ENCODE measurements at regions of chr2 and their contacts with region 1.

Region 1: DNA sequence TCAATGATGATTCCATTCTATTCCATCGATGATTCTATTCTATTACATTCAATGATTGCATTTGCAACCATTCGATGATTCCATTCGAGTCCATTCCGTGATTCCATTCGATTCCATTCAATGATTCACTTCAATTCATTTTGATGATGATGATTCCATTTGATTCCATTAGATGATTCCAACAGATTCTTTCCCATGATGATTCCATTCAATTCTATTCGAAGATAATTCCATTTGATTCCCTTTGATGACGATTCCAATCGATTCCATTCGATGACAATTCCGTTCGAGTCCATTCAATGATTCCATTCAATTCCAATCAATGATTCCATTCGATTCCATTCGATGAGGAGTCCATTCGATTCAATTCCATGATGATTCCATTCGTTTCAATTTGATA is 1088.8 kb downstream of the RPIA start:
- DNase-seq: no peak
- ATAC-seq: no peak
- H3K4me3 ChIP-seq: no peak overlapping the region
- H3K27ac ChIP-seq: no peak overlapping the region
- H3K4me1 ChIP-seq: no peaks in the 10 kb centered on the region
- H3K27me3 ChIP-seq: no peaks in the 10 kb centered on the region
- CTCF ChIP-seq: no peak
- EP300 ChIP-seq: no peak
- POLR2A ChIP-seq: no peak
- RAD21 ChIP-seq: no peak

Region 2: DNA sequence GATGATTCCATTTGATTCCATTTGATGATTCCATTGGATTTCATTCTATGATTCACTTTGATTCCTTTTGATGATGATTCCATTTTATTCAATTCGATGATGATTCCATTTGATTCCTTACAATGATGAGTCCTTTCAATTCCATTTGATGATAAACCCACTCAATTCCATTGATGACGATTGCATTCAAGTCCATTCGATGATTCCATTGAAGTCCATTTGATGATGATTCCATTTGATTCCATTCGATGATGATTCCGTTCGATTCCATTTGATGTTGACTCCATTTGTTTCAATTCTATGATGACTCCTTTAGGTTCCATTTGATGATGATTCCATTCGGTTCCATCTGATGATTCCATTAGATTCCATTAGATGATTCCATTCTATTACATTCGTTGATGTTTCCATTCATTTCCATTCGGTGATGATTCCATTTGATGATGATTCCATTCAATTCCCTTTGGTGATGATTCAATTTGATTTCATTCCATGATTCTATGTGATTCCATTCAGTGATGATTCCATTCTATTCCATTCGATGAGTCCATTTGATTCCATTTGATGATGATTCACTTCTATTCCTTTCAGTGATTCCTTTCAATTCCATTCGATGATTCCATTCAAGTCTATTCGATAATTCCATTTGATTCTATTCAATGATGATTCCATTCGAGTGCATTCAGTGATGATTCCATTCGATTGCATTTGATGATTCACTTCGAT is 17.2 kb after region 1 on chr2:
- CTCF ChIA-PET with region 1: no interaction called
- POLR2A ChIA-PET with region 1: no interaction called
- in situ Hi-C with region 1: no loop called
- intact Hi-C with region 1: no loop called
- DNase-seq: no peak
- ATAC-seq: no peak
- H3K4me3 ChIP-seq: no peak overlapping the region
- H3K27ac ChIP-seq: no peak overlapping the region
- H3K4me1 ChIP-seq: no peaks in the 10 kb centered on the region
- H3K27me3 ChIP-seq: no peaks in the 10 kb centered on the region
- CTCF ChIP-seq: no peak
- EP300 ChIP-seq: no peak
- POLR2A ChIP-seq: no peak
- RAD21 ChIP-seq: no peak

Region 3: DNA sequence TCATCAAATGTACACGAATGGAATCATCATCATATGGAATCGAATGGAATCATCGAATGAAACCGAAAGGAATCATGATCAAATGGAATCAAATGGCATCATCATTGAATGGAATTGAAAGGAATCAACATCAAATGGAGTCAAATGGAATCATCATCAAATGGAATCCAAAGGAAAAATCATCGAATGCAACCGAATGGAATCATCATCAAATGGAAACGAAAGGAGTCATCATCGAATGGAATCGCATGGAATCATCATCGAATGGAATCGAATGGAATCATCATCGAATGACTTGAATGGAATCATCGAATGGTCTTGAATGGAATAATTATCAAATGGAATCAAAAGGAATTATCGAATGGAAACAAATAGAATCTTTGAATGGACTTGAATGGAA is 27.4 kb after region 1 on chr2:
- CTCF ChIA-PET with region 1: no interaction called
- POLR2A ChIA-PET with region 1: no interaction called
- in situ Hi-C with region 1: no loop called
- intact Hi-C with region 1: no loop called
- DNase-seq: no peak
- ATAC-seq: no peak
- H3K4me3 ChIP-seq: no peak overlapping the region
- H3K27ac ChIP-seq: no peak overlapping the region
- H3K4me1 ChIP-seq: no peaks in the 10 kb centered on the region
- H3K27me3 ChIP-seq: no peaks in the 10 kb centered on the region
- CTCF ChIP-seq: no peak
- EP300 ChIP-seq: no peak
- POLR2A ChIP-seq: no peak
- RAD21 ChIP-seq: no peak

Region 4: GRCh38 chr2:91420761-91421340 is 1640.5 kb after region 1 on chr2:
- CTCF ChIA-PET with region 1: no interaction called
- POLR2A ChIA-PET with region 1: no interaction called
- in situ Hi-C with region 1: loop called (anchors 25 kb)
- intact Hi-C with region 1: no loop called
- DNase-seq: no peak
- ATAC-seq: no peak
- H3K4me3 ChIP-seq: no peak overlapping the region
- H3K27ac ChIP-seq: no peak overlapping the region
- H3K4me1 ChIP-seq: no peaks in the 10 kb centered on the region
- H3K27me3 ChIP-seq: no peaks in the 10 kb centered on the region
- CTCF ChIP-seq: no peak
- EP300 ChIP-seq: no peak
- POLR2A ChIP-seq: no peak
- RAD21 ChIP-seq: no peak